Motor neuron (in vitro differentiated cells): ENCODE measurements at regions of chr1 and their contacts with region 1.

Region 1: GRCh38 chr1:55277377-55278130 is 62.4 kb upstream of the USP24 start:
- ATAC-seq: peak; percentile 81 to 99 (median 98)
- H3K4me3 ChIP-seq: no peak overlapping the region
- H3K27ac ChIP-seq: no peak overlapping the region
- H3K4me1 ChIP-seq: peaks cover 0 to 4% of the 10 kb centered on the region in 2 donors

Region 2: DNA sequence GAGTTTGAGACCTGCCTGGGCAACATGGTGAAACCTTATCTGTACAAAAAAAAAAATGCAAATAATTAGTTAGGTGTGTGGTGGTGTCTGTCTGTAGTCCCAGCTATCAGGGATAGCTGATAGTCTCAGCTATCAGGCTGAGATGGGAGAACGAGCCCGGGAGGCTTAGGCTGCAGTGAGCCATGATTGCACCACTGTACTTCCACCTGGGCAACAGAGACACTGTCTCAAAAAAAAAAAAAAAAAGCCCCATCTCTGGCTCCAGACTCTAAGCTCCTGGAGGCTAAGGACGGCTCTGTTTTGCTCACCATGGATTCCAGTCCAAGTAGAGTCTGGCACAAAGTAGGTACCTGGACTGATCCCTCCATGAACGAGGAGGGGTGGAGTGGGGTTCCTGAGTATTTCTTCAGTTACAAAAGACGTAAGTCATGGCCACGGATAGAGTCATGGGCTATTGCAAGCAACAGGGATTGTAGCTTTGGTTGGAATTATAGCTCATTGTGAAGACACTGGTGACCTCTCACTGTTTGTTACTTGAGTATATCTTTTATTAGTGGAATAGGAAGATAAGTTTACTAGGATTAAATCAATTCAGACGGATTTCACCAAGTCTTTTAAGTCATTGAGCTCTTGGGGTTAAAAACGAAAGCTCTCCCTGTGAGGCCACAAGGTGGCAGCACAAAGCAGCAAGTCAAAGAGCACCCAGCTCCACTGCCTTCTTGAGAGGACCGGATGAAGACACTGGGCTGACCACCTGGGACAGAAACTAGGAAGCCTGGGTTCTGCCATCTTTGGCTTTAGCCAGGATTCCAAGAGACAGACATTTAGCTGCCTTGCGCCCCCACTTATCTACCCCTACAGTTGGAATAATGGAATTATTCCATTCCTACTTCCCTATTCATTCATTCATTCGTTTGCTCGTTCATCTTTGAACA is 332.7 kb before region 1 on chr1:
- in situ Hi-C with region 1: loop called in 1 of 9 experiments (anchors 25 kb)
- ATAC-seq: peak; percentile 43 to 96 (median 74)
- H3K4me3 ChIP-seq: no peak overlapping the region
- H3K27ac ChIP-seq: no peak overlapping the region
- H3K4me1 ChIP-seq: no peaks in the 10 kb centered on the region

Region 3: GRCh38 chr1:55140546-55140983 is 137.0 kb before region 1 on chr1:
- in situ Hi-C with region 1: loop called in 4 of 9 experiments (anchors 10 to 25 kb)
- ATAC-seq: peak; percentile 78 to 100 (median 90)
- H3K4me3 ChIP-seq: no peak overlapping the region
- H3K27ac ChIP-seq: no peak overlapping the region
- H3K4me1 ChIP-seq: no peaks in the 10 kb centered on the region

Region 4: DNA sequence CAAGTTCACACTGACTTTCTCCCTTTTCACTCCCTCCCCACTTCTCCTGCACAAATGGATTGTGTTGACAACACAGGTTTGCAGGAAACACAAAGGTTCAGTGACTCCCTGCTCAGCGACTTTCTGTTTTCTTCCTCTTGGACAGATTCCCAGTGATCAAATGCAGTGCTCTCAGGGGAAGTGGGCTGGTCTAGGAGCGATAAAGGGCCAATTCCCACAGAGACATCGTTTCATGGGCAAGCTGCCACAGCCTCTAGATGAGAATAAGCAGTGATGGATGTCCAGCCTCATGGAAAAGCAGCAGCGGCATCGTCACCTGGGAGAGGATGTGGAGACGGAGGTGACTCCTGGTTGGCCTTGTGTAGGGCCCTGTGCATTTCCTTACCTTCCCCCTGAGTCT is 1511.0 kb after region 1 on chr1:
- in situ Hi-C with region 1: loop called in 1 of 9 experiments (anchors 25 kb)
- ATAC-seq: peak in 4 of 8 experiments; percentile 44 to 75 (median 56)
- H3K4me3 ChIP-seq: no peak overlapping the region
- H3K27ac ChIP-seq: peak overlapping the region in 1 of 2 donors; percentile 30
- H3K4me1 ChIP-seq: peaks cover 9 to 12% of the 10 kb centered on the region in 2 donors